ENCODE measurements at regions of chr16 and their contacts with region 1.

Region 1: GRCh38 chr16:20675488-20676267 is 21.8 kb downstream of the ACSM1 start:
- DNase-seq: peak; percentile 36
- H3K4me3 Mint-ChIP-seq: peak overlapping the region; percentile 80
- H3K27ac Mint-ChIP-seq: peak overlapping the region; percentile 79
- H3K4me1 Mint-ChIP-seq: peaks cover 24% of the 10 kb centered on the region
- H3K27me3 Mint-ChIP-seq: no peaks in the 10 kb centered on the region
- CTCF ChIP-seq: no peak

Region 2: GRCh38 chr16:20720251-20720650 is 44.6 kb after region 1 on chr16:
- CTCF ChIA-PET with region 1: no interaction called
- POLR2A ChIA-PET with region 1: no interaction called
- intact Hi-C with region 1: no loop called
- DNase-seq: no peak
- H3K4me3 Mint-ChIP-seq: no peak overlapping the region
- H3K27ac Mint-ChIP-seq: no peak overlapping the region
- H3K4me1 Mint-ChIP-seq: no peaks in the 10 kb centered on the region
- H3K27me3 Mint-ChIP-seq: peaks cover 13% of the 10 kb centered on the region
- CTCF ChIP-seq: no peak

Region 3: DNA sequence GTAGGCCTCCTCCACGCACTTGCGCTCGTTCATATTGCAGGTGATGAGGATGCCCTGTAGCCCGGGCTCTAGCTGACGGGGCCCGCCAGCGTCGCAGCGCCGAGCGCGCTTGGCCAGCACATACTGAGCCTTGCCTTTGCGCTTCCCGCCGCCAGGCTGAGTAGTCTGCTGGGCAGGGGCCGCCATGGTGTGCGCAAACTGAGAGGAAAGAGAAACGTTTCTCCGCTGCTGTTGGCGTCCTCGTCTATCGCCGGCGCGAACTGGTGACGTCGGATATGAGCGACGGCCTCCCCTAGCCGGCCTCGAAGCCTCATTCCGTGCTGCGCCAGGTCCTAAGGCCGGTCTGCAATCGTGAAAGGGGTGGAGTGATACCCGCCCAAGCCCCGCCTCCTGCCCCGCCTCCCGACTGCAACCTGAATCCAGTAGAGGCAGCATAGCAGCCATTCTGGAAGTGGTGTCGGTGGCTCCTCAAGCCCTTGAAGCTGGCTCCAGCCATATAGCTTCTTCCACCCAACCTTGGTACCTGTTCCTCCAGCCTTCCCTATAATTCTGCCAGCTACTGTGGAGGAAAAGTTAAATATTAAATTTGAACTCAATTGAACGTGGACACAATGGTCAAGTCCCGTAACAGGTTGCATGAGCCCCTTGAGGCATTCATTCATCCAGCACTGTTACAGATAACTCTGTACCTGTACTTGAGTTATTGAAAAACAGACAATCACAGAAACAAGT is 66.0 kb after region 1 on chr16 and contains the start of gene THUMPD1:
- CTCF ChIA-PET with region 1: interaction called, 11 read pairs
- POLR2A ChIA-PET with region 1: interaction called, 10 read pairs
- intact Hi-C with region 1: no loop called
- DNase-seq: peak; percentile 94
- H3K4me3 Mint-ChIP-seq: peak within 1 kb of the TSS; percentile 93
- H3K27ac Mint-ChIP-seq: peak within 1 kb of the TSS; percentile 81
- H3K4me1 Mint-ChIP-seq: peaks cover 11% of the 10 kb centered on the region
- H3K27me3 Mint-ChIP-seq: no peaks in the 10 kb centered on the region
- CTCF ChIP-seq: no peak
- total RNA-seq, gene THUMPD1: 26.5 and 38.7 TPM in 2 replicates

Measured in MCF 10A (cell line).